A549 (cell line): ENCODE measurements at regions of chr17 and their contacts with region 1.

Region 1: DNA sequence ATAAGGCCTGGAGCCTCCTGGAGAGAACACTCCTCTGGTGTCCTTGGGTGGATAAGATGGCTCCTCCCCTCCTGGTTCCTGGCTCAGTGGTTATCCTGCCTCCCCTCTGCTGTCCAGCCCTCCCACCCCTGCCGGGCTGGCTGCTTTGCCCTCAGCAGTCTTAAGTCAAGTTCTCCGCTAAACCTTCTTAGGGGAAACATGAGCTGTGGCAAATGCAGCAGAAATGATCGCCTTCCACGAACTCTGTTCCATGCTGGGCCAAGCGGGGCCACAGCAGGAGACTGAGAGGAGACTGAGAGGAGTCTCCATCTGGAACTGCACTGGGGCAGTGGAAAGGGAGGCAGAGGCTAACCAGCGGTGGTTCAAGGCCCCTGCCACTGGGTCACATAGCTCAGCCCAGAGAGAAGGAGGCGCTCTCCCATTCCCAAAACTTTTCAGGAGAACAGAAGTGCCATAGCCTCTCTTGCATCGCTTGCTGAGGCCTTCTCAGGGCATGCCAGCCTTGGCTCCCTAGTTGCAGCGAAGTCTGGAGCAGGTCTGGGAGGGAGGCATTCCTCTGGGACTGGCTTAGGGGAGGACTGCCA is 26.9 kb downstream of the TNS4 start:
- DNase-seq: no peak
- ATAC-seq: peak; percentile 2 to 4; a peak in 4 of 6 replicates
- H3K4me3 ChIP-seq: no peak overlapping the region
- H3K27ac ChIP-seq: peak overlapping the region; percentile 96 to 97
- H3K4me1 ChIP-seq: peaks cover 83% of the 10 kb centered on the region
- CTCF ChIP-seq: no peak
- EP300 ChIP-seq: no peak
- POLR2A ChIP-seq: 0 out of 2 replicates have a peak, but pooled peaks have one; percentile 5
- RAD21 ChIP-seq: no peak

Region 2: DNA sequence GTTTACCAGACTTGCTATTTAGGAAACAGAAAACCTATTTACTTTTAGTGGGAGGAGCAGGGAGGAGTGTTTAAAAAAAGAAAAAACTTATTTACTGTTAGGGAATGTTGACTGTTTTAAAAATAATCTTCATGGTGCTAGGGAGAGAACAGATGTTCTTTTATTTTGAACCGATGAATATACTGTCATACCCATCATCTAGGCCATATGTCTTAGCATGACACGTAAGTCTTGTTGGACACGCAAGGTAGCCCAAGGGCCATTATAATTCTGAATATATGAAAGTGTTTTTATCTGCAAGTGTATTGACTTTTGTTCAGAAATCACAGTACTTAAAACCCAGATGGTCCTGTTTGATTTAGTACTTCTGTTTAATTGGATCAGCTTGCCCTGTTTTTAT is 243.8 kb before region 1 on chr17:
- CTCF ChIA-PET with region 1: no interaction called
- POLR2A ChIA-PET with region 1: no interaction called
- DNase-seq: no peak
- ATAC-seq: no peak
- H3K4me3 ChIP-seq: no peak overlapping the region
- H3K27ac ChIP-seq: no peak overlapping the region
- H3K4me1 ChIP-seq: no peaks in the 10 kb centered on the region
- CTCF ChIP-seq: no peak
- EP300 ChIP-seq: no peak
- POLR2A ChIP-seq: no peak
- RAD21 ChIP-seq: no peak

Region 3: DNA sequence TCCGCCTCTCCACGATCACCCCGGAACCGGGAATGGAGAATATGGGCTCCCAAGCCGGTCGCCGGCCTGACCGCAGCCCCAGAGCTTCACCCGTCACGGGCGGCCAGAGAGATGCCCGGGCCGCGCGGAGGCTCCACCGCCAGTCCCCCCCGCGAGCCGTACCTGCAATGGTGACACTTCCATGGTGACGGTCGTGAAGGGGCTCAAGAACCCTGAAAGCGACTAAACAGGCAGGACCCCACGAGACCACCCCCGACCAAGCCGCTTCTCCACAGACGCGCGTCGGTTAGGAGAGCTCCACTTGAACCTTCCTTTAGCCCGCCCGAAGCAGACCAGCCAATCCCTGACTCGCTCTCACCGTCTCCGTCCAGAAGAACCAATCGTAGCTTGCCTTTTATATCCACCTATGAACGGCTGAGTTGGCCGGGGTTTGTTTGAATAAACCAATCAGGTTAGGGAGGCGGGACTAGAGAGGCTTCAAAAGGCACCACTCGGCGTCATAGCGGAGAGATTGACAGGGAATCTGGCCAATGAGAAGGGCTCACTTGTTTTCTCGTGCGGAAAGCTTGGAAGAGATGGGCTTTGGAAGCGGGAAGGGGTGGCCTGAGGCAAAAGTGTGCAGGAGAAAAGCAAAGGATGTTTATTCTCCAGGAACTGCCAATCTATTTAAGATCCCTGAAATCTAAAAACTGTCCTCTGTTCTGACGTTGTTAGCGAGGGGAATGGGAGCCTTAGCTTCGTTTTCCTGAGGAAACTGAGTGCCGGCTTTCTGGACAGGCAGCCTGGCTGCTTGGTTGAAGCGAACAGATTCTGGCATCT is 56.7 kb before region 1 on chr17 and contains the start of gene TOP2A:
- CTCF ChIA-PET with region 1: interaction called, 22 read pairs
- POLR2A ChIA-PET with region 1: interaction called, 3 read pairs
- DNase-seq: peak; percentile 100
- ATAC-seq: peak; percentile 95 to 96
- H3K4me3 ChIP-seq: peak within 1 kb of the TSS; percentile 68
- H3K27ac ChIP-seq: peak within 1 kb of the TSS; percentile 79 to 92
- H3K4me1 ChIP-seq: peaks cover 39% of the 10 kb centered on the region
- CTCF ChIP-seq: no peak
- EP300 ChIP-seq: no peak
- POLR2A ChIP-seq: peak; percentile 62
- RAD21 ChIP-seq: no peak
- polyA plus RNA-seq, gene TOP2A: 273 and 416 TPM in 2 replicates

Region 4: DNA sequence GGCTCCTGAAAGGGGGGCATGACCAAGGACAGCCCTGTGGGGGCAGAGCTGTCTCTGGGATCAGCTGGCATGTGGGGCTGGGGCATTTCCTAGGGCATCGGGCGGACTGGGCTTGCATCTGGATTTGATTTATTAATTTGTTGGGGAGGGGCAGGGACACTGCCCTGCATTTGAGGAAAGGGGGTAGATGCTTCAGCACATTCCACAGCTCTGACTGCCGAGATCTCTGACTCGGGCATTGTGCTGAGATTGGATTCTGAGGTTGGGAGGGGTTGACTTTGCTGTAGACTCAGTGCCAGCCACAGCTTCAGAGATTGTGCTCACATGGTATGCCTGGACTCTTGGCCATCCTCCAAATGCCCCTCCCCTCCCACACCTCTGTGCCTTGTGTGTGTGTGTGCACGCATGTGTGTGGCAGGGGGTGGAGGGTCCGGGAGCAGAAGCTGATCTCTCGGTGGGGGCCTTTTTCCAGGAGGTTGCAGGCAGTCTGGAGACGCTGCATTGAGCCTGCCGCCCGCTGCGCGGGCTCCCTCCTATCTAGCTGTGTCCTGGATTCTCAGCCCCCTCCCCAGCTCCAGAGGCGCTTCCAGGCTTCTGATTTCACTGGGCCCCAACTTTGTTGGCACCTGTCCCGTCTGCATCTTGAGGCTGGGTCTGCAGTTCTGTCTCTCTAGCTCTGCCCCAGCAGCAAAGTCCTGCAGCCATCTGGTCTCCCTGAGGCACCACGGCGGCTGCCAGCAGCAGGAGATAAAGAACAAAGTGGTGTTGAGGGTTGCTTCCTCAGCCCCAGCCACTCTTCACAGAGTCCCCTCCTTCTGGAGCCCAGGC is 16.3 kb before region 1 on chr17:
- CTCF ChIA-PET with region 1: interaction called, 120 read pairs
- POLR2A ChIA-PET with region 1: interaction called, 36 read pairs
- DNase-seq: peak in 1 of 2 experiments; percentile 68
- ATAC-seq: peak in 1 of 2 experiments; percentile 7; a peak in 3 of 6 replicates
- H3K4me3 ChIP-seq: peak overlapping the region; percentile 16
- H3K27ac ChIP-seq: peak overlapping the region; percentile 71 to 90
- H3K4me1 ChIP-seq: peaks cover 100% of the 10 kb centered on the region
- CTCF ChIP-seq: no peak
- EP300 ChIP-seq: no peak; a peak in 1 of 5 replicates
- POLR2A ChIP-seq: no peak
- RAD21 ChIP-seq: no peak

Region 5: GRCh38 chr17:40499551-40500174 is 25.2 kb after region 1 on chr17:
- CTCF ChIA-PET with region 1: interaction called, 44 read pairs
- POLR2A ChIA-PET with region 1: interaction called, 8 read pairs
- DNase-seq: peak; percentile 85 to 88
- ATAC-seq: peak; percentile 77 to 80
- H3K4me3 ChIP-seq: peak overlapping the region; percentile 60
- H3K27ac ChIP-seq: peak overlapping the region; percentile 96 to 97
- H3K4me1 ChIP-seq: peaks cover 71% of the 10 kb centered on the region
- CTCF ChIP-seq: no peak
- EP300 ChIP-seq: no peak
- POLR2A ChIP-seq: peak; percentile 74
- RAD21 ChIP-seq: peak; percentile 16 to 28; a peak in 2 of 5 replicates

Region 6: GRCh38 chr17:40522250-40522952 is 47.9 kb after region 1 on chr17:
- CTCF ChIA-PET with region 1: interaction called, 822 read pairs
- POLR2A ChIA-PET with region 1: interaction called, 4 read pairs
- DNase-seq: no peak
- ATAC-seq: no peak
- H3K4me3 ChIP-seq: no peak overlapping the region
- H3K27ac ChIP-seq: peak overlapping the region; percentile 97 to 99
- H3K4me1 ChIP-seq: peaks cover 63% of the 10 kb centered on the region
- CTCF ChIP-seq: no peak
- EP300 ChIP-seq: no peak
- POLR2A ChIP-seq: no peak
- RAD21 ChIP-seq: no peak